Astrocyte of the cerebellum (primary cell): ENCODE measurements at regions of chr12 and their contacts with region 1.

Region 1: DNA sequence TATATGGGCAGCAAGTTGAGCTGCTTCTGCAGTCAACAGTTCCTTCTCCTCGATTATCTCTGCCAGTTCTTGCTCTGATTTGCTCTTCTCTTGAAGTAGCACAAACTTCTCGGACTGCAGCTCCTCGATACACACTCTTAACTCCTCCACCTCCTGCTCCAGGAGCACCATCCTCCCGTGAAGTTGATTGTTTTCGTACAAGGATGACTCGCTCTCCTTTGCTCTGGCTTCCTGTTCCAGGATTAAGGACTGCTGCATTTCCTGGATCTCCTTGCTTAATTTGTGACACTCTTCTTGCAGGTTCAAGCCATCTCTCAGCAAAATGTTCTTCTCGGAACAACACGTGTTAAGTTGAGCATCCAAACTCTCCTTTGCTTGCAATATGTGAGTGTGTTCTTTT is 56.2 kb upstream of the VPS33A start:
- DNase-seq: no peak
- H3K4me3 ChIP-seq: no peak overlapping the region
- CTCF ChIP-seq: no peak

Region 2: DNA sequence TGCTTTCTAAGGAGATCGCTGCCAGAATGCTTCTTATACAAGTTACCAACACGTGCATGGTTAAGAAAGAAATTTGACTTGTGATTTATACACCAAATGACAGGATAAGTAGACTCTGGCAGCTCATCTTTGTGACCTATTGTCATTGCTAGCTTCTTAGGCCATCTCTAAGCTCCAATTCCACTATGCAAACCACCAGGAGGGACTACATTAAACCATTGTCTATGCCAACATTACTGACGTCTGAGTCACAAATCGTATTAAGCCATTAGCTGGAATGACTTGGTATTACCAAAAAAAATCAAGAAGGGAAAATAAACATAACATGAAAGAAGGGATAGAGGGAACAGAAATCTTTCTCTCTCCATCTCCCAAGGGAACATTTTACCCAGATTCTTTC is 40.4 kb before region 1 on chr12:
- in situ Hi-C with region 1: loop called (anchors 5 kb)
- DNase-seq: peak; percentile 61
- H3K4me3 ChIP-seq: no peak overlapping the region
- CTCF ChIP-seq: no peak

Region 3: DNA sequence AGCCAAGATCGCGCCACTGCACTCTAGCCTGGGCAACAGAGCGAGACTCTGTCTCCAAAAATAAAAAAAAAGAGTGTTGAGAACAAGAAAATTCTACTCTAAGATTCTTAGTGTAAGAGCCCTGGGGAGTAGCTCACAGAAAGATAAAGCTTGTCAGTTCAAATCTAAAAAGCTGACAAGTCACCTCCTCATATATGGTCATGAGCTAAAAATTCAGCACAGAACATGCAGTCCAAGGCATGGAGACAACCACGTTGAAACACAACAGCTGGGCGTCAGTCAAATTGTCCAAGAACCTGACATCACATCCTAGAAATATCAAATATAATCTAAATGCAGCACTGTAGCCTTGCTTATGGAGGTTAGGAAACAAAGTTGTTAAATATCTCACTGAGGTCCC is 52.2 kb after region 1 on chr12:
- in situ Hi-C with region 1: no loop called
- DNase-seq: no peak
- H3K4me3 ChIP-seq: no peak overlapping the region
- CTCF ChIP-seq: no peak